ENCODE measurements at regions of chr20 and their contacts with region 1.

Region 1: GRCh38 chr20:25399037-25399430 is 8.4 kb upstream of the ABHD12 start:
- DNase-seq: peak; percentile 76
- H3K4me3 Mint-ChIP-seq: no peak overlapping the region
- H3K27ac Mint-ChIP-seq: no peak overlapping the region
- H3K4me1 Mint-ChIP-seq: no peaks in the 10 kb centered on the region
- H3K27me3 Mint-ChIP-seq: no peaks in the 10 kb centered on the region
- CTCF ChIP-seq: peak; percentile 62

Region 2: GRCh38 chr20:25178563-25179438 is 220.2 kb before region 1 on chr20:
- CTCF ChIA-PET with region 1: interaction called, 13 read pairs
- POLR2A ChIA-PET with region 1: interaction called, 3 read pairs
- intact Hi-C with region 1: loop called (anchors 1 kb)
- DNase-seq: peak; percentile 96
- H3K4me3 Mint-ChIP-seq: no peak overlapping the region
- H3K27ac Mint-ChIP-seq: peak overlapping the region; percentile 0
- H3K4me1 Mint-ChIP-seq: peaks cover 27% of the 10 kb centered on the region
- H3K27me3 Mint-ChIP-seq: no peaks in the 10 kb centered on the region
- CTCF ChIP-seq: peak; percentile 77

Region 3: GRCh38 chr20:25294459-25295385 is 104.3 kb before region 1 on chr20:
- CTCF ChIA-PET with region 1: interaction called, 79 read pairs
- POLR2A ChIA-PET with region 1: interaction called, 11 read pairs
- intact Hi-C with region 1: no loop called
- DNase-seq: peak; percentile 28
- H3K4me3 Mint-ChIP-seq: no peak overlapping the region
- H3K27ac Mint-ChIP-seq: peak overlapping the region; percentile 75
- H3K4me1 Mint-ChIP-seq: peaks cover 9% of the 10 kb centered on the region
- H3K27me3 Mint-ChIP-seq: no peaks in the 10 kb centered on the region
- CTCF ChIP-seq: peak; percentile 49

Region 4: DNA sequence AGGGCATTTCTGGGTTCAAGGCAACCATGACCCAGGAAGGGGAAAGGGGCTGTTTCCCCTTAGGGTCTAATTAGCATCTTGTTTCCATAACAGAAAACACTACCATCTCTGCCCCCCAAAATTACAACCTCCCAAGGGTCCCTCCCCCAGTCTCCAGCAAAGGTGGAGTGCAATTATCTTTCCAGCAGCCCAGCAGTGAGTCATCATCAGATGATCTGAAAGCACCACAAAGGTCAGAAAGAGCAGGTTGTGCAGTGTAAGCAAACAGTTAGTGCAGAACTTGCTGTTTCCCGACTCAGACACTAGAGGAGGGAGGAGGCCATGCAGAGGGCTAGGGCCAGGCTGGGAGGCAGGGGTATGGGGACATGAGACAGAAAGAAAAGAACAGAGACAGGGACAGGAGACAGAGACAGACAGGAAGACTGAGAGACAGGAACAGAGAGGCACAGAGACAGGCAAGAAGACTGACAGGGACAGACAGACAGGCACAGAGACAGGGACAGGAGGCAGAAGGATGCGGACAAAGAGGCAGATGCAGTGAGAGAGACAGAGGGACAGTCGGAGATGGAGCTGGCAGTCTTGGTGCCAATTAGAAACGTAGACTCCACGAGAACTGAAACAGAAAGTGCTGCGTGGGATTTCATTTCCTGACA is 88.6 kb before region 1 on chr20:
- CTCF ChIA-PET with region 1: interaction called, 68 read pairs
- POLR2A ChIA-PET with region 1: interaction called, 12 read pairs
- intact Hi-C with region 1: loop called (anchors 1 kb)
- DNase-seq: peak; percentile 91
- H3K4me3 Mint-ChIP-seq: peak overlapping the region; percentile 56
- H3K27ac Mint-ChIP-seq: peak overlapping the region; percentile 88
- H3K4me1 Mint-ChIP-seq: peaks cover 32% of the 10 kb centered on the region
- H3K27me3 Mint-ChIP-seq: no peaks in the 10 kb centered on the region
- CTCF ChIP-seq: peak; percentile 30

Region 5: DNA sequence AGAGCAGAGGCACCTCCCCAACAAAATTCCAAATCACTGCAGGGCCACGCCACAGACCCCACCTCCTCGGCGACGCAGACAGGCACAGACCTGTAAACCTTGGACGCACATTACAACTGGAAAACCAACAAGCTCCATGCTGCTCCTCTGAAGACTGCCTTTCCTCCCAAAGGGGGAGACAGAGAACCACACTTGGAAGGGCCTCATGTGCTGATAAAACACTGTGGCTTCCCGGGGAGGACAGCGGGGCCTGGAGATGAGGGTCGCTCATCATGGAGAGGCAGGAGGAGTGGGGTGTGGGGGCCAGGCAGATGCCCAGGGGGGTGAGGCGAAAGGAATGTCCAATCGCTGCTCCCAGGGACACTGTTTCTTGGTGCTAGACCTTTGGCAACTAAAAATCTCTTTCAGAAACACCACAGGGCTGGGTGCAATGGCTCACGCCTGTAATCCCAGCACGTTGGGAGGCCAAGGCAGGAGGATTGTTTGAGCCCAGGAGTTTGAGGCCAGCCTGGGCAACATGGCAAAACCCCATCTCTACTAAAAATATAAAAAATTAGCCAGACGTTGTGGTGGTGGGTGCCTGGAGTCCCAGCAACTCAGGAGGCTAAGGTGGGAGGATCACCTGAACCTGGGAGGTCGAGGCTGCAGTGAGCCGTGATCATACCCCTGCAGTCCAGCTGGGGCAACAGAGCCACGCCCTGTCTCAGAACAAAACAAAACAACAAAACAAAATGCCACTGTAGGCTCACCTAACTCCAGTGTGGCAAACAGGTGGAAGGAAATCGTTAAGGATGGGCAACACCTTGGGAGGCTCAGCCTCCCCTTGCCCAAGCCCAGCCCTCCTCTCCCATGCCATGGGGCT is 62.2 kb before region 1 on chr20:
- CTCF ChIA-PET with region 1: interaction called, 19 read pairs
- POLR2A ChIA-PET with region 1: no interaction called
- intact Hi-C with region 1: loop called (anchors 2 kb)
- DNase-seq: peak; percentile 44
- H3K4me3 Mint-ChIP-seq: no peak overlapping the region
- H3K27ac Mint-ChIP-seq: no peak overlapping the region
- H3K4me1 Mint-ChIP-seq: no peaks in the 10 kb centered on the region
- H3K27me3 Mint-ChIP-seq: no peaks in the 10 kb centered on the region
- CTCF ChIP-seq: peak; percentile 8

Region 6: DNA sequence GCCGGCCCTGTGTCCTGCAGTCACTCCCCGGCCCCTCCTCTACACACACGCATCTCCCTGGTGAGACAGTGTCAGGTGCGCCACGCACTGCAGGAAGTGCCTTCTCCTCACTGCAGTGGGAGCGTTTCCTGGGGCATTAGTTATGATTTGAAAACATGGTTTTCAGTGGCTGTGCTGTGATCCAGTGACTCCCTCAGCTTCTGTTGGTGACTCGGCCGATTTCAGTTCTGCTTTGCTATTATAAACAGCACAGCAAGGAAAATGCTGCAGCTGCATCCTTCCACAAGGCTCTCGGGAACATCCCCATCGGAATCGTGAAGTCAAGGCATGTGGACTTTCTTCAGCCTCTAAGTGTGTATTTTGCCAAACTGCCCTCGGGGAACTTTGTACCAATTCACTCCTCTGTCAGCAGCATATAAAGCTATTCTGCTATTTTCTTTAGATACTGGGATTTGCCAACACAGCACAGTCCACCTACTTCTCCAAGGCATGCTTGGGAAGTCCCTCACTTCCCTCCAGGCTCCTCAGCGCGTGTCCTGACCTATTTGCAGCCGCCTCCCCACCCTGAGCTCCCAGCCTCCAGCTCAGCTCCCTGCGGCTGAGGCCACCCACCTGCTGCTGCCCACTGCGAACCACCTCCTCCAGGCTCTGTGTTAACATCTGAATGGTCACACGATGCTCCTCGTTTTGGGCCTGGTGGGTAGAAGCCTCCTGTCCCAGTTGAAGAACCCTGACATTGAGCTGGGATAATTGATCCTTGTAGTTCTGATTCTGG is 62.9 kb after region 1 on chr20:
- CTCF ChIA-PET with region 1: no interaction called
- POLR2A ChIA-PET with region 1: no interaction called
- intact Hi-C with region 1: no loop called
- DNase-seq: no peak
- H3K4me3 Mint-ChIP-seq: no peak overlapping the region
- H3K27ac Mint-ChIP-seq: no peak overlapping the region
- H3K4me1 Mint-ChIP-seq: no peaks in the 10 kb centered on the region
- H3K27me3 Mint-ChIP-seq: peaks cover 12% of the 10 kb centered on the region
- CTCF ChIP-seq: no peak